Adrenal gland (tissue), 19 donors: ENCODE measurements at regions of chr1 and their contacts with region 1.

Region 1: GRCh38 chr1:94801919-94802546 is 18.1 kb upstream of the SLC44A3 start:
- DNase-seq: peak in 6 of 7 donors; percentile 29 to 70 (median 38)
- H3K4me3 ChIP-seq: peak overlapping the region in 1 of 4 donors; percentile 31
- H3K27ac ChIP-seq: peak overlapping the region in 4 of 5 donors; percentile 54 to 81 (median 67)
- H3K4me1 ChIP-seq: peaks cover 11 to 79% of the 10 kb centered on the region in 2 donors
- H3K27me3 ChIP-seq: no peaks in the 10 kb centered on the region
- CTCF ChIP-seq: peak in 5 of 6 experiments; percentile 38 to 59 (median 43)
- POLR2A ChIP-seq: no peak

Region 2: GRCh38 chr1:94481473-94481933 is 320.5 kb before region 1 on chr1:
- intact Hi-C with region 1: loop called in 1 of 2 experiments (anchors 10 kb)
- DNase-seq: peak; percentile 28 to 72 (median 46)
- H3K4me3 ChIP-seq: no peak overlapping the region
- H3K27ac ChIP-seq: no peak overlapping the region
- H3K4me1 ChIP-seq: no peaks in the 10 kb centered on the region
- H3K27me3 ChIP-seq: no peaks in the 10 kb centered on the region
- CTCF ChIP-seq: peak; percentile 61 to 82 (median 78)
- POLR2A ChIP-seq: no peak

Region 3: DNA sequence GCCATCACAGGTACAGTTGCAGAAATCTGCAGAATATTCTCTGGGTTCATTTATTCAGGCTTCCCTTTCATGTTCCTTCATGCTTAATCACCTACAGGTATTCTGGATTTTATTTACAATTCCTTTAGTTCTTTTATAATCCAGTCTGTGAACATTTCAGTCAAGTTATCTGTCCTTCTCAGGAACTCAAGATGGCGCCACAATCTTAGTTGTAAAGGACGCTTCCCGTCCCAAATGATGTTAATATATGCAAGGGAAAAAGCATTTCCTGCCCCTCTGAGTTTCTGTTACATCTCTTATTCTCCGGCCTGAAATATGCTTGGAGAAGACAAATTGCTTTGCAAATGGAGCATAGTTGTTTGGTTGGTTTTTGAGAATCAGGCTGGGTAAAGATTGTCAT is 279.7 kb before region 1 on chr1:
- intact Hi-C with region 1: loop called in 1 of 2 experiments (anchors 5 kb)
- DNase-seq: peak in 1 of 7 donors; percentile 46
- H3K4me3 ChIP-seq: no peak overlapping the region
- H3K27ac ChIP-seq: no peak overlapping the region
- H3K4me1 ChIP-seq: no peaks in the 10 kb centered on the region
- H3K27me3 ChIP-seq: no peaks in the 10 kb centered on the region
- CTCF ChIP-seq: peak in 5 of 6 experiments; percentile 36 to 55 (median 45)
- POLR2A ChIP-seq: no peak

Region 4: DNA sequence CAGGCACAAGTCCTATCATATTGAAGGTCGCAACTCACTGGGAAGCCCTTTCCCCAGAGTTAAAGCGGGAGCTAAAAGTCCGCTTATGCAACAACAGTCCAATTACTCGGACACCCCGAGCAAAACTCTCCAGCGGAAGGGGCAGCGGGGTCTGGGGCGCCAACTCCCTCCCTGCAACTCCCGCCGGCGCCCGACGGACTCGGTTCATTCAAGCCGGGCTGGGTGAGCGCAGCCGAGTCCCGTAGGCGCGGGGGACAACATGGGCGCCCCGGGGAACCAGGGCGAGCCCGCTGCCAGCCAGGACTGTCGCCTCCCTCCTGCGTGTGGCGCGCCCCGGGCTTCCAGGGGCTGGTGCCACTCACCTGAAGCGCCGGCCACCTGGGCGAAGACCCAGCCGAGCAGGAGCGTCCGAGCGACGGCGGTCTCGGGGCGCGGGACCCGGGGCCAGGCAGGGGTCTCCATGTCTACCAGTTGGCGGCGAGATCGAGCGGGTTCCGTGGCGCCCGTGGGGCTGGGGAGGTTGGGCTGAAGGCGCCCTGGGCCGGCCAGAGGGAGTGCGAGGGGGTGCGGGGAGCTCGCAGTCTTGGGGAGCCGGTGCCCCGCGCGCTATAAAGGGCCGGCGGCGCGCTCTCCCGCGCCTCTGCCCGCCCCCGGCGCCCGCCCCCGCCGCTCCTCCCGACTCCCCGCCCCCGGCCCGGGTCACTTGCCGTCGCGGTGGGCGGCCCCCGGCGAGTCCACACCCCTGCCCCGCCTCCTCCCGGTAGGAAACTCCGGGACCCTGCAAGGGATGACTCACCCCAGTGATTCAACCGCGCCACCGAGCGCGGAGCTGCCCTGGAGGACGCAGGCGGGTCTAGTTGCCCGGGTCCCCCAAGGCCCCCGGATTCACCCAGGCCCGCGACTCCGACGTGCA is 260.6 kb before region 1 on chr1 and contains the start of gene F3:
- intact Hi-C with region 1: loop called in 1 of 2 experiments (anchors 5 kb)
- DNase-seq: peak; percentile 92 to 96 (median 95)
- H3K4me3 ChIP-seq: peak within 1 kb of the TSS; percentile 62 to 82 (median 69)
- H3K27ac ChIP-seq: peak within 1 kb of the TSS in 4 of 5 donors; percentile 69 to 93 (median 87)
- H3K4me1 ChIP-seq: peaks cover 27 to 61% of the 10 kb centered on the region in 2 donors
- H3K27me3 ChIP-seq: no peaks in the 10 kb centered on the region
- CTCF ChIP-seq: peak in 1 of 6 experiments; percentile 7
- POLR2A ChIP-seq: peak; percentile 66 to 95
- total RNA-seq, gene F3: 11.8 to 38.9 (median 21.3) TPM

Region 5: DNA sequence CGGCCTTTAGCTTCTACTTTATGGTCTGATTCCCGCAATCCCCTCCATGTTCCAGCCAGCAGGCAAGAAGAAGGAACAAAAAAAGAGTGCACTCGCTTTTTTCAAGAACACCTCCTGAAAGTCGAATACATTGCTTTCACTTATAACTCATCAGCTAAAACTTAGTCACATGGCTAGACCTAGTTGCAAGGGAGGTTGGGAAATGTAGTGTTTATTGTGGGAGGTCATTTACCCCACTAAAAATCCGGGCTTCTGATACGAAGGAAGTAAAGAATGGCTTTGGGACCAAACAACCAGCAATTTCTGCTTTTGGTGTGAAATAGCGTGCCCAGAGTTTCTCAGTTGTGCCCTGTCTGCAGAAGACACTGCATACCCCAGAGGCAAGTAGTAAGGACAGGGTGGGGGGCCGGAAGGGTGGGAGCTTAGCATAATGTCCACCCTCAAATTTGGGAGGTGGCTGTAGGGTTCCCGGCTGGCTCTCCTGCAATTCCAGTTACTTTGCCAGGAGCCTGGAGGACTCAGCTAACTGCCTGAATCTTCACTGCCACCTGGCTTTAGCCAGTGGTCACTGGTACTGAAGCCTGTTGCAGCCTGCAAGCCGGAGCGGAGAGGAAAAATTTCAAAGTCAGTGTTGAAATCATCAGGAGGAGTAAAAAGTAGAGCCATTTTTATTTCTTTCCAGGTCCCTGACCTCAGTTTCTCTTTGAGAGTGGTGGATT is 202.8 kb before region 1 on chr1:
- intact Hi-C with region 1: loop called (anchors 5 to 10 kb)
- DNase-seq: peak; percentile 59 to 87 (median 75)
- H3K4me3 ChIP-seq: no peak overlapping the region
- H3K27ac ChIP-seq: peak overlapping the region in 1 of 5 donors; percentile 54
- H3K4me1 ChIP-seq: no peaks in the 10 kb centered on the region
- H3K27me3 ChIP-seq: no peaks in the 10 kb centered on the region
- CTCF ChIP-seq: peak; percentile 47 to 77 (median 71)
- POLR2A ChIP-seq: no peak

Region 6: GRCh38 chr1:94739521-94740061 is 62.4 kb before region 1 on chr1:
- intact Hi-C with region 1: no loop called
- DNase-seq: no peak
- H3K4me3 ChIP-seq: no peak overlapping the region
- H3K27ac ChIP-seq: no peak overlapping the region
- H3K4me1 ChIP-seq: peaks cover 0 to 22% of the 10 kb centered on the region in 2 donors
- H3K27me3 ChIP-seq: no peaks in the 10 kb centered on the region
- CTCF ChIP-seq: no peak
- POLR2A ChIP-seq: no peak